Activated naive CD4-positive, alpha-beta T cell treated with anti-CD3 and anti-CD28 coated beads for 36 hours (primary cell): ENCODE measurements at regions of chr3 and their contacts with region 1.

Region 1: DNA sequence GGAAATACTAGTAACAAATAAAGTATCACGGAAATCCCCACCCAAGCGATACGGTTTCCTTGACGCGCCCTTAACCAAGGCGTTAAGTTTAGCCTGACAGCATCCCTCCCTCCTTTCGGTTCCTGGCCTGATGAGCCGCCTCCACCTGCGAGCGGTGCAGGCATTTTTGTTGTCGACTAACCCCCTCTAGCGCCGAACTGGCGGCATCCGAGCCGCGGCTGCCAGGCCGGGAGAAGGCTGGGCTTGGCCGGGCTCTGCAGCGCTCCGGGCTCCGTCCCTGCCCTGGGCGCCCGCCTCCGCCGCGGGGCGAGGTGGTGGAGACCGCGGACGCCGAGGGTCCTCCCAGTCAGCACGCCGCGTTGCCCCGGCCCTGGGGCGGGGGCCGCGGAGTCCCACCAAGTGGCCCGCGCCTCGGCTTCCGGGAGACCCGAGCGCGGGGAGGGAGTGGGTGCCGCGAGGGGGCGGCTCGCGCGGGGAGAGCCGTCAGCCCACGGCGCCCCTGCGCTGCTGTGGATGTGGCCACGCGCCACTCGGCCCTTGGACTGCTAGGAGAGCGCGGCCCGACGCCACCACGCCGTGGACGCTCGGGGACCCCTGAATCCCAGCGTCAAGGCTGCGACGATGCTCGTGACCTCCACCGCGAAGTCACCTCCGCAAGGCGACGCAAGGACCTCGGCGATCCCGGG is 1.1 kb upstream of the EPHA6 start:
- DNase-seq: peak; percentile 81
- H3K4me3 Mint-ChIP-seq: peak overlapping the region; percentile 57
- H3K27ac Mint-ChIP-seq: no peak overlapping the region
- H3K4me1 Mint-ChIP-seq: peaks cover 10% of the 10 kb centered on the region
- H3K27me3 Mint-ChIP-seq: peaks cover 30% of the 10 kb centered on the region

Region 2: GRCh38 chr3:94862703-94863102 is 1950.6 kb before region 1 on chr3:
- CTCF ChIA-PET with region 1: no interaction called
- intact Hi-C with region 1: loop called (anchors 5 kb)
- DNase-seq: no peak
- H3K4me3 Mint-ChIP-seq: no peak overlapping the region
- H3K27ac Mint-ChIP-seq: no peak overlapping the region
- H3K4me1 Mint-ChIP-seq: no peaks in the 10 kb centered on the region
- H3K27me3 Mint-ChIP-seq: no peaks in the 10 kb centered on the region

Region 3: DNA sequence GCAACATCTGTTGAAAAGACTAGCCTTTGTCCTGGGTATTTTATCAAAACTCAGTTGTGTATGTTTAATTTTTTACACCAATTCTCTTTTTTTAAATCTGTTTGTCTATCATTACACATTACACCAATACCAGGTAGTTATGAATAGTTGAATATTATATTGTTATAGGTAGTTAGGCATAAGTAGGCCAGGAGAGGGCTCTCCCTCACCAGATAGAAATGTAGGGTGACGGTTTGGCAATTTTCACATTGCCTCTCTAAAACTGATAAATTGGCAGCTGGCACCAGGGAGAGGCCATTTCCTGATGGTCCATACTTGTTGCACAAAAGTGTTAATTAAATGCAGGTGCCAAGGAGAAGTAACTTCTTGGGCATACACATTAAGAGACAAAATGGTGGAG is 481.9 kb before region 1 on chr3:
- CTCF ChIA-PET with region 1: no interaction called
- intact Hi-C with region 1: loop called (anchors 5 kb)
- DNase-seq: no peak
- H3K4me3 Mint-ChIP-seq: no peak overlapping the region
- H3K27ac Mint-ChIP-seq: no peak overlapping the region
- H3K4me1 Mint-ChIP-seq: no peaks in the 10 kb centered on the region
- H3K27me3 Mint-ChIP-seq: no peaks in the 10 kb centered on the region

Region 4: DNA sequence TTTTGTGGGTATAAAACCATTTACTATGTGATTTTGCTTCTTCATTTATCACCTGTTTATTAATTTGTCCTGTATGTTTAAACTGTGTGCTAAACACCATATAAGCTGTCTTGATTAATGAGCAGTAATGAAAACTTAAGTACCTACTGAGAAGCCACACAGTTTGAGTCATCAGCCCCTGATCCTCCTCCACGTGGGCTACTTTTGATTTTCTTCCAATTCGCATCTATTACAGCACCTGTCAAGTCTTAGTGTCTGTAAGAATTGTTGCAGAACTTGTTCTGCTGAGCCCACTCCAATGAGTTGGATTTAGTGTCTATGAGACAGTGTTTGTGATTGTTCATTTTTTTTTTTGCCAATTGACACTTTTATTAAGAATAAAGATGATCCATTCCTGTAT is 17.9 kb after region 1 on chr3:
- CTCF ChIA-PET with region 1: no interaction called
- intact Hi-C with region 1: no loop called
- DNase-seq: no peak
- H3K4me3 Mint-ChIP-seq: no peak overlapping the region
- H3K27ac Mint-ChIP-seq: no peak overlapping the region
- H3K4me1 Mint-ChIP-seq: no peaks in the 10 kb centered on the region
- H3K27me3 Mint-ChIP-seq: no peaks in the 10 kb centered on the region